Stomach (tissue), 19 donors: ENCODE measurements at regions of chr10 and their contacts with region 1.

Region 1: DNA sequence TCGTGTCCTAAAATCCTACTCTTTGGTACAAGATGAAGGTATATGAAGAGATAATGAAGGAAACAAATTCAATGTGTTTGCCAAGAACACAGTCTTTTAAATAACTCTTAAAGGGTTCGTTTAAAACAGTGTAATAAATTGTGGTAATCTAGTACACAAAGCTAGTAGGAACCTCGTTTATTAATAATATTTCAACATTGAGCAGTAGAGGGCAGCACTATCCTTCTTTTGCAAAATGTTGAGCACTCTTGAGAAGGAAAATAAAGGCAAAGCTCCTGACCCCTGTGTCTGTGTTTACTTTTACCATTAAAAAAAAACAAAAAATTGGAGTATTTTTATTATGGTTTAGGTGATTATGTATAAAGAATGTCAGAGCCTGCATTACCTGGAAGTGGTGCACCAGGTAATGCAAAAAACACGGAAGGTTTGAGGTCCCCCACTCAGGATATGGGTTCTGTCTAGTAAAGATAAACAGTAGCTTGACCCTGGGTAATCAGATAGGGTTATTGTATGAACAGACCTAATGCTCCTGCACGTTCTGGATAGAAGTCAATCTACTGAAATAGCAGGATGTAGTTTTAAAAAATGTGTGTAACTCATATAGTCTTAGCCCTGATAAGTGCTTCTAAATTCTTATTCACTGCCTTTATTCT is 5.7 kb upstream of the GOT1 start:
- DNase-seq: peak in 1 of 2 donors; percentile 81
- H3K4me3 ChIP-seq: no peak overlapping the region
- H3K27ac ChIP-seq: no peak overlapping the region
- H3K4me1 ChIP-seq: peaks cover 22 to 56% (median 43%) of the 10 kb centered on the region in 4 donors
- H3K27me3 ChIP-seq: no peaks in the 10 kb centered on the region
- CTCF ChIP-seq: peak in 5 of 7 experiments; percentile 16 to 56 (median 41)
- EP300 ChIP-seq: no peak
- POLR2A ChIP-seq: no peak

Region 2: DNA sequence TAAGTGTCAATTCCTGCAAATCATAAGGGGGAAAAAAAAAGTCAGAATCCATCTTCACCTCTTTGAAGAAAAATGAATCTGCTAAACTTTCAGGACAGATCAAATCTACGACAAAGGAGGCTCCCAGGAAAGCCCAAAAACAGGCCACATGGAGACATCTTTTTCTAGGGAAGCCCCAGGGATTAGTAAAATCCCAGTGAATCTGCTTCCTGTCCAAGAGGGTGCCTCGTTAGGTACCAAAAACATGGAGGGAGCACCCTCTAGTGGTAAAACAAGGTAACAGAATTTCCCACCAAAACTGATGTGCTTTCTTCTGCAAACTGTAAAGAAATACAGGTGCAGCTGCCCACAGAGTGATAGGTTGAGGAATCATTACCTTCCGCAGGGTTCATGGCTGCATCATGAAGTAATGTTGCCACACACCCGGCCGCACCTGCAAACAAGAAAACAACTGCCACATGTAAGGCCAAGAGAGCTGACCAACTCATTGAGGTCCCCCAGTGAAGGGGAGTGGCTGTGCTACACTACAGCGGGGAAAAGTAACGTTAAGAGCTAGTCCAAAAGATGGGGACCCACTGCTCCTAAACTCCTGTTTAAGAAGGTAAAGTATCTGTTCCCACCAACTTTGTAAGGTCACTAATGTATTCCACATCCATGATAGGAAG is 176.2 kb after region 1 on chr10:
- intact Hi-C with region 1: loop called (anchors 5 kb)
- DNase-seq: peak in 1 of 2 donors; percentile 83
- H3K4me3 ChIP-seq: no peak overlapping the region
- H3K27ac ChIP-seq: no peak overlapping the region
- H3K4me1 ChIP-seq: peaks cover 2 to 26% (median 18%) of the 10 kb centered on the region in 4 donors
- H3K27me3 ChIP-seq: no peaks in the 10 kb centered on the region
- CTCF ChIP-seq: peak in 5 of 7 experiments; percentile 48 to 81 (median 74)
- EP300 ChIP-seq: no peak
- POLR2A ChIP-seq: no peak